ENCODE measurements at regions of chr1 and their contacts with region 1.

Region 1: GRCh38 chr1:201792534-201793305 is 36.2 kb upstream of the IPO9 start:
- DNase-seq: peak; percentile 83
- ATAC-seq: peak; percentile 92
- H3K4me3 ChIP-seq: no peak overlapping the region
- H3K27ac ChIP-seq: no peak overlapping the region
- H3K4me1 ChIP-seq: peaks cover 12% of the 10 kb centered on the region
- H3K27me3 ChIP-seq: no peaks in the 10 kb centered on the region
- CTCF ChIP-seq: peak; percentile 91

Region 2: GRCh38 chr1:201709564-201710295 is 83.0 kb before region 1 on chr1:
- CTCF ChIA-PET with region 1: interaction called, 35 read pairs
- POLR2A ChIA-PET with region 1: no interaction called
- intact Hi-C with region 1: loop called (anchors 1 kb)
- DNase-seq: peak; percentile 65
- ATAC-seq: peak; percentile 59
- H3K4me3 ChIP-seq: no peak overlapping the region
- H3K27ac ChIP-seq: no peak overlapping the region
- H3K4me1 ChIP-seq: peaks cover 34% of the 10 kb centered on the region
- H3K27me3 ChIP-seq: no peaks in the 10 kb centered on the region
- CTCF ChIP-seq: peak; percentile 72

Region 3: DNA sequence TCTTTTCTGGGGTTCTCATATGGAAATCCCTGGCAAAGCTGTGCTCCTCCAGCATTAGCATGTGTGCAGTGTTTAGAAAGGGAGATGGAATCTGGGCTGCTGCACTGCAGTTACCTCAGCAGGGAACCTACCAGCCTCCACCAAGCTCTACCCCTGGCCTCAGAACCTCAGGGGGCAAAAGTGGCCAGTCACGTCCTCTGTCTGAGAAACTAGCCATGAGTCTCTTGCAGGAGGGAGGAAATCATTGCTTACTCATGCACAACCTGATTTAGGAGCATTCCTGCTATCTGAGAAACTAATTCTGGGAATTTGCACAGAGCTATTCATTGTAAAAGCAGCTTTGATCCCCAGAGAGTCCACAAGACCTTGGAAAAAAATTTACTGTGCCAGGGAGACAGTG is 44.4 kb before region 1 on chr1:
- CTCF ChIA-PET with region 1: no interaction called
- POLR2A ChIA-PET with region 1: no interaction called
- intact Hi-C with region 1: no loop called
- DNase-seq: peak; percentile 40
- ATAC-seq: peak; percentile 35; the same call in 1 of the 2 replicates
- H3K4me3 ChIP-seq: no peak overlapping the region
- H3K27ac ChIP-seq: no peak overlapping the region
- H3K4me1 ChIP-seq: peaks cover 27% of the 10 kb centered on the region
- H3K27me3 ChIP-seq: no peaks in the 10 kb centered on the region
- CTCF ChIP-seq: no peak

Region 4: DNA sequence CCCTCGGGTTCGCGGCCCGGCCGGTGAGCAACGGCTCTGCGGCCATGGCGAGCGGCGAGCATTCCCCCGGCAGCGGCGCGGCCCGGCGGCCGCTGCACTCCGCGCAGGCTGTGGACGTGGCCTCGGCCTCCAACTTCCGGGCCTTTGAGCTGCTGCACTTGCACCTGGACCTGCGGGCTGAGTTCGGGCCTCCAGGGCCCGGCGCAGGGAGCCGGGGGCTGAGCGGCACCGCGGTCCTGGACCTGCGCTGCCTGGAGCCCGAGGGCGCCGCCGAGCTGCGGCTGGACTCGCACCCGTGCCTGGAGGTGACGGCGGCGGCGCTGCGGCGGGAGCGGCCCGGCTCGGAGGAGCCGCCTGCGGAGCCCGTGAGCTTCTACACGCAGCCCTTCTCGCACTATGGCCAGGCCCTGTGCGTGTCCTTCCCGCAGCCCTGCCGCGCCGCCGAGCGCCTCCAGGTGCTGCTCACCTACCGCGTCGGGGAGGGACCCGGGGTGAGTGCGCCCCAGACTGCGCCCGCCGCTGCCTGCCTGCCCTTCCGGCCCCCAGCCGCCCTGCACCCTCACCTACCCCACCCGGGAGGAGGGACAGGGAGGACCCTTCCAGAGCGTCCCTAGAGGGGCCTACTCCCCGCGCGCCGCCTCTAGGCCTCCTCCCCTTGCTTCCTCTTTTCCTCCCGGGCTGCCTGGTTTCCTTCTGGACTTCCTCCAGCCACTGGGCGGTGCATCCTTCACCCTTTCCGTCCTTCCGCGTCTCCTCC is 190.1 kb after region 1 on chr1 and contains the start of gene RNPEP:
- CTCF ChIA-PET with region 1: no interaction called
- POLR2A ChIA-PET with region 1: no interaction called
- intact Hi-C with region 1: no loop called
- DNase-seq: peak; percentile 73
- ATAC-seq: peak; percentile 79
- H3K4me3 ChIP-seq: peak within 1 kb of the TSS; percentile 96
- H3K27ac ChIP-seq: peak within 1 kb of the TSS; percentile 31
- H3K4me1 ChIP-seq: peaks cover 11% of the 10 kb centered on the region; the same call in 1 of the 2 replicates
- H3K27me3 ChIP-seq: no peaks in the 10 kb centered on the region
- CTCF ChIP-seq: peak; percentile 22; the same call in 1 of the 2 replicates
- total RNA-seq, gene RNPEP: 64.7 and 74.8 TPM in 2 replicates